ENCODE measurements at regions of chr1 and their contacts with region 1.

Region 1: GRCh38 chr1:28886731-28887418 is 27.5 kb upstream of the EPB41 start:
- DNase-seq: peak; percentile 85
- ATAC-seq: peak; percentile 83

Region 2: DNA sequence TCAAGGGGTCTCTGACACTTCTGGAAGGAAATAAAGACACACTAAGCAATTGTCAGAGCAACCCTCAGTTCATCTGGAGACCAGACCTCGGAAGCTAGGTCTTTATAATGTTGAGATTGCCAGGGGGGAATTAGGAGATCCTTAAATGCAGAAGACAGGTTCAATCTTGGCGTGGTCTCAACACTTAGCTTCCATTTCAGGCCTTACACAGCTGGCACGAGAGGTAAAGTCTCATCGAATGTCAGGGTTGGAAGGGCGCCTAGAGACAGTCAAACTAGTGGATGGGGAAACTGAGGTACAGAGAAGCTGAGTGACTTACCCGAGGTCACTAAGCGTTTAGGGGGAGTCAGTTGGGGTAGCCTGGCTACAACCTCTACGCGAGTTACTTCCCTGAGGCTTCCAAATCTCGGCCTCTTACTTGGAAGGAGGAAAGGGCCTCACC is 26.9 kb after region 1 on chr1:
- intact Hi-C with region 1: no loop called
- DNase-seq: no peak
- ATAC-seq: no peak

Region 3: DNA sequence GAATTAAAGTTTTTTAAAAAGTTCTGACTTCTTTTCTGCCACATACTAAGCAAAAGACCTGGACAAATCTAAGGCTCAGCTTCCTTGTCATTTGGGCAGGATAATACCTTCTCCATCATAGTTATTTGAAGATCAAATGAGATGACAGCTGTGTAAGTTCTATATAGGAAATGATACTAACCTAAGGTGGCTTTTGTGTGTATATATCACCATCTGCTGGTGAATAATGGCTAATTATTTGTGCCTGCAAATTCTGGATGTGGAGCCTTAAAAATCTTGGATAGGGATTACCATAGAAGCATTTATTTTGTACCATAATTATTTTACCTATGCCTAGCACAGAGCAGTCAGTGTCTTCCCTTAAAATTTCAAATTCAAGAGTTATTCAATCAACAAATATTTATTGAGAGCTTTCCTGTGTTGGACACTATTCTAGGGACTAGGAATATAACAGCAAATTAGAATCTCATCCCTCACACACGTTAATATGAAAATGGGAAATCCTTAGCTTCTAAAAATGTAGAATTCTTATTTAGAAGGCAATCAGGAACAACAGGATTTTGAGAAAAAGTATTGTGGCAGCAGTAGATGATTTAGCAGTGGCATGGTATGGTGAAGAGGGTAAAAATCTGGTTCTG is 147.1 kb after region 1 on chr1:
- intact Hi-C with region 1: loop called (anchors 10 kb)
- DNase-seq: no peak
- ATAC-seq: peak; percentile 51

Region 4: GRCh38 chr1:29202584-29203340 is 315.9 kb after region 1 on chr1:
- intact Hi-C with region 1: loop called (anchors 5 kb)
- DNase-seq: peak; percentile 99
- ATAC-seq: peak; percentile 97